PC-9 (cell line): ENCODE measurements at regions of chr2 and their contacts with region 1.

Region 1: DNA sequence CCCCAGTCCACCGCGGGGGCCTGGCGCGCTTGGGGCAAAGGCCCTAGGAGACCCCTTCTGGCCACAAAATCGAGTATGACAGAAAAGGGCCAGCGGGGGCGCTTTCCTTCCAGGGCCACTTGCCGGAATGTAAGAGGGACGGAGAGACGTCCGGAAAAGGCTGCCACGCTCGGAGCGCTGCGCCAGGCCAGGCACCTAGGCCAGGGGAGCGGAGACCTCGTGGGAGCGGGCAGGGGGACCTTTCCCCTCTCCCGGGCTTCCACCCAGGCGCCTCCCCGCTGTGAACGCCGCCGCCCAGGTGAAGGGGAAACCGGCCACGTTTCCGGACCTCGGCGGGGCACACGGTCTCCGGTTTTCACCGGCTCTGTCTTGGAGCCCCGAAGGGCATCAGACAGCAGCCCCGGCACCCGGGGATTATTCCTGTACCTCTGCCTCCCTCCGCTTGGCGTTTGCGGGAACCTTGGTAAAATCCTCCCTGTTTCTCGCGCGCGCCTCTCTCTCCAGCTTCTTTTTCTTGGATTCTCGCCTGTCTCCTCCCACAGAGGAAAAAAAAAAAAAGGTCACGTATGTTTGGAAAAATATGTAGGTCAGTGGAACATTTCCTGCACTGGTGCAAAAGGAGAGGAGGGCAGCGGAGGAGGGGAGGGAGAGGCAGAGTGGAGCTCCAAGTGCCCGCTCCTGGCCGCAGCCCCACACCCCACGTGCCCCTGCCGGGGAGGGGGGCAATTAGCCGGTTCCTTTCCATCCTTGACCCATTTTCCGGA is 1.2 kb upstream of the NPAS2 start:
- DNase-seq: peak; percentile 55 to 76
- H3K4me3 ChIP-seq: peak overlapping the region; percentile 73
- H3K27ac ChIP-seq: peak overlapping the region; percentile 83
- H3K4me1 ChIP-seq: peaks cover 33% of the 10 kb centered on the region
- H3K27me3 ChIP-seq: no peaks in the 10 kb centered on the region
- CTCF ChIP-seq: peak; percentile 50; the same call in 1 of the 2 replicates

Region 2: GRCh38 chr2:100703213-100703612 is 115.6 kb before region 1 on chr2:
- CTCF ChIA-PET with region 1: no interaction called
- POLR2A ChIA-PET with region 1: interaction called, 18 read pairs
- intact Hi-C with region 1: no loop called
- DNase-seq: no peak
- H3K4me3 ChIP-seq: no peak overlapping the region
- H3K27ac ChIP-seq: no peak overlapping the region
- H3K4me1 ChIP-seq: no peaks in the 10 kb centered on the region
- H3K27me3 ChIP-seq: no peaks in the 10 kb centered on the region
- CTCF ChIP-seq: no peak

Region 3: DNA sequence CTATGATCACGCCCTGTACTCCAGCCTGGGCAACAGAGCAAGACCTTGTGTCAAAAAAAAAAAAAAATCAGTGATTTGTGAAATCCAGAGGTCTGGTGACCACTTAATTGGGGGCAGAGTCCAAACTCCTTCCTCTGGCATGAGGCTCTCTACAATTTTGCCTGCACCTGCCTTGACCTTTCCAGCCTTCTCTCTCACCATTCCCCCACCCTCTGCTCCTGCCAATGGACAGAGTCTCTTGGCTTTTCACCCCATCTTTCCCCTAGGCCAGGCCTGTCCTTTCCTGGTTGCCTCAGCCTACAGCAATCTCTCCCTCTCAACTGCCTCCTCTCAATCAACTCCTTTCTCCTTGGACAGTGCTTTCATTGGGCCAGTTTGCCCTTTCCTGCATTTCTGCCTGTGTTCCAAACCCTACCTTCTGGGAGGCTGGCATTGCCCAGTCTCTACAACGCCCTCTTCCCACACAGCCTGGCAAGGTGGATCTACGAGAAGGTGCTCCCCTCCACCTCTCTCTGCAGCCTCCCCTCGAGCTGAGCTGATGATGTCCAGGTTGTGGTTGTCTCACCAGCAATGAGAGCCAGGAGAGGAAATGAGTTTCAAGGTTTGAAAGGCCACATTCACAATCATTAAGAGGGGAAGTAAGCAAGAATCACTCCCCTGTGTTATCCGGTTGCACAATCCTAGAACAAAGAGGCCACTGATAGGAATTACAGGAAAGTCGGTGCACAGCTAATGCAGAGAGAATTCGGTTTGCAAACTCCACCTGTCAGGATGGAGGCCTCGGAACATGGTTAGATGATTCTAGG is 38.4 kb before region 1 on chr2:
- CTCF ChIA-PET with region 1: no interaction called
- POLR2A ChIA-PET with region 1: interaction called, 4 read pairs
- intact Hi-C with region 1: loop called (anchors 2 kb)
- DNase-seq: peak; percentile 50 to 98
- H3K4me3 ChIP-seq: peak overlapping the region; percentile 17; the same call in 1 of the 2 replicates
- H3K27ac ChIP-seq: peak overlapping the region; percentile 92
- H3K4me1 ChIP-seq: peaks cover 64% of the 10 kb centered on the region
- H3K27me3 ChIP-seq: no peaks in the 10 kb centered on the region
- CTCF ChIP-seq: no peak

Region 4: GRCh38 chr2:100893392-100894089 is 74.8 kb after region 1 on chr2:
- CTCF ChIA-PET with region 1: no interaction called
- POLR2A ChIA-PET with region 1: no interaction called
- intact Hi-C with region 1: loop called (anchors 2 kb)
- DNase-seq: peak; percentile 77 to 85
- H3K4me3 ChIP-seq: no peak overlapping the region
- H3K27ac ChIP-seq: peak overlapping the region; percentile 80
- H3K4me1 ChIP-seq: peaks cover 76% of the 10 kb centered on the region
- H3K27me3 ChIP-seq: no peaks in the 10 kb centered on the region
- CTCF ChIP-seq: no peak

Region 5: GRCh38 chr2:100957996-100958653 is 139.3 kb after region 1 on chr2:
- CTCF ChIA-PET with region 1: no interaction called
- POLR2A ChIA-PET with region 1: no interaction called
- intact Hi-C with region 1: loop called (anchors 5 kb)
- DNase-seq: peak; percentile 48 to 54
- H3K4me3 ChIP-seq: no peak overlapping the region
- H3K27ac ChIP-seq: peak overlapping the region; percentile 70
- H3K4me1 ChIP-seq: peaks cover 18% of the 10 kb centered on the region; the same call in 1 of the 2 replicates
- H3K27me3 ChIP-seq: no peaks in the 10 kb centered on the region
- CTCF ChIP-seq: no peak

Region 6: DNA sequence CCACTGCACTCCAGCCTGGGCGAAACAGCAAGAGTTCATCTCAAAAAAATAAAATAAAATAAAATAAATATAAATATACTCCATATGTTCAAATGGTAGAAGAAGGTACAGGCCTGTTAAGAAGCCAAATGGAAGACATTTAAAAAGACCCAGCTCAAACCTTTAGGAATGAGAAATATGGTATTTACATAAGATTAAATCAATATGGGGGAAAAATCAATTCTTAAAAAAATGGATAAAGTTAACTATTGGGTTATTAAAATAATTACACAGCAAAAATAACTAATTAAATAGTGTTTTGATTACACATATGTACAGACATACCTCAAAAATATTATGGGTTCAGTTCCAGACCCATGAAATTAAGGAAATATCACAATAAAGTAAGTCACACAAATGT is 247.5 kb after region 1 on chr2:
- CTCF ChIA-PET with region 1: no interaction called
- POLR2A ChIA-PET with region 1: no interaction called
- intact Hi-C with region 1: no loop called
- DNase-seq: no peak
- H3K4me3 ChIP-seq: no peak overlapping the region
- H3K27ac ChIP-seq: peak overlapping the region; percentile 13; the same call in 1 of the 2 replicates
- H3K4me1 ChIP-seq: peaks cover 18% of the 10 kb centered on the region
- H3K27me3 ChIP-seq: no peaks in the 10 kb centered on the region
- CTCF ChIP-seq: no peak